HepG2 (cell line): ENCODE measurements at regions of chr21 and their contacts with region 1.

Region 1: DNA sequence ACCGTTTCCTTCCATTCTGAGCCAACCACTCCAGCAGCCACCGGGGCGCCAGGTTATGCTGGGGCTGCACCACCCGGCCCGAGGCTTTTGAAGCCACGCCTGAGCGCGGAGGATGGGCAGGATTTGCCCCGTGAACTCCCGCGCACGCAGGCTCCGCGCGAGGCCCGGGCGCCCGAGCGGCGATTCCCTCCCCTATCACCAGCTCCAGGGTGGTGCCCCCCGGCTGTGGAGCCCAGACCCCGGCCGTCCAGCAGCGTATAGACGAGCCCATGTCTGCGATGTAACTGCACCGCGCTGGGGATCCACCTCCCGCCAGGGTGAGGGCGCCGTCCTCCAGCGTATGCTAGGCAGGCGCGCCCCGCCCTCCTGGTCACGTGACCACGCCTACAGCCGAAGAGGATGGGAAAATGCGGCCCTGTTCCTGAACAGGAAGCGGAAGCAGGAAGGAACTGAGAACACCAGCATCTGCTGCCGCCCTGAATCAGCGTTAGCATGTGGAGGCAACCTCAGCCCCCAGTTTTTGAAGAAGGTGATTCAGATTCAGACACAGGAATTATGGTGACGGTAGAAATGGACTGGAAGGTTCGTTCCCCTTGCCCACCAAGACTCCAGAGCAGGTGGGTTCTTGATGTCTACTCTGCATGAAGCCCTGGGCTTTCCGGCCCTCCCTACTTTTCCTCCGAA is 46.0 kb downstream of the VPS26C start:
- DNase-seq: peak; percentile 93
- ATAC-seq: peak; percentile 92
- H3K4me3 ChIP-seq: peak overlapping the region; percentile 66 to 78 (median 67)
- H3K27ac ChIP-seq: peak overlapping the region; percentile 74
- H3K4me1 ChIP-seq: peaks cover 21% of the 10 kb centered on the region
- H3K27me3 ChIP-seq: no peaks in the 10 kb centered on the region
- CTCF ChIP-seq: peak; percentile 98
- EP300 ChIP-seq: peak in 1 of 2 experiments; percentile 6; a peak in 1 of 4 replicates
- POLR2A ChIP-seq: peak; percentile 72 to 91; a peak in 3 of 4 replicates
- RAD21 ChIP-seq: peak; percentile 82

Region 2: DNA sequence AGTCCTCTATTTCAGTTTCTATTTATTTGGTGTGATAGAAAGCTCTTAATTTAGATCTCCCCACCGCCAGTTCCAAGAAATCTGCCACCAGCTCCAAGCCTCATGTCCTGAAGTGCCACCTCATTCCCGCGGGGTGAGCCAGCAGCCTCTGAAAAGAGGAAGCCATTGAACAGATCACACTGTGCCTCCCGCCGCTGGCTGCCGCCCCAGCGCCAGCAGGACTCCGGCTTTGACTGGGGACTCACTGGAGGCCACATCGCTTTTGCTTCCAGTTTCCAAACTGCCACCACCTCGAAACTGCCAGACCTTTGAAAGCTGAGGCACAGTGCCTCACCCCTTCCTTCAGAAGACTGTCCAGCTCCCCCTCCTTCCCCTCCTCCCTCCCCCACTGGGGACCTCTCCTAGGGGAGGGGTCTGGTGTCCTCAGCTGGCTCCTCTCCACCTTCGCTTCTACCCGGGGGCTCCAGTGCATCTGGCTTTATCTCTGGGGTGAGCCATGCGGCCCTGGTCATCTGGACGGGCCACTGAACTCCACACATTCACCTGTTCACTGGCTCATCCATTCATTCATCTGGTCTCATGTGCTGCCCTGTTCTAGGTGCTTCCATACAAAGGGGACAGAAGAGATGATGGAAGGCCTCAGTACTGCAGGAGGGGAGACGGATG is 12.9 kb before region 1 on chr21:
- CTCF ChIA-PET with region 1: no interaction called
- POLR2A ChIA-PET with region 1: interaction called, 11 read pairs
- in situ Hi-C with region 1: no loop called
- intact Hi-C with region 1: loop called (anchors 2 kb)
- DNase-seq: peak; percentile 13
- ATAC-seq: peak; percentile 81
- H3K4me3 ChIP-seq: peak overlapping the region; percentile 45 to 69 (median 57)
- H3K27ac ChIP-seq: peak overlapping the region; percentile 66
- H3K4me1 ChIP-seq: peaks cover 45% of the 10 kb centered on the region
- H3K27me3 ChIP-seq: no peaks in the 10 kb centered on the region
- CTCF ChIP-seq: no peak
- EP300 ChIP-seq: no peak
- POLR2A ChIP-seq: no peak
- RAD21 ChIP-seq: no peak

Region 3: DNA sequence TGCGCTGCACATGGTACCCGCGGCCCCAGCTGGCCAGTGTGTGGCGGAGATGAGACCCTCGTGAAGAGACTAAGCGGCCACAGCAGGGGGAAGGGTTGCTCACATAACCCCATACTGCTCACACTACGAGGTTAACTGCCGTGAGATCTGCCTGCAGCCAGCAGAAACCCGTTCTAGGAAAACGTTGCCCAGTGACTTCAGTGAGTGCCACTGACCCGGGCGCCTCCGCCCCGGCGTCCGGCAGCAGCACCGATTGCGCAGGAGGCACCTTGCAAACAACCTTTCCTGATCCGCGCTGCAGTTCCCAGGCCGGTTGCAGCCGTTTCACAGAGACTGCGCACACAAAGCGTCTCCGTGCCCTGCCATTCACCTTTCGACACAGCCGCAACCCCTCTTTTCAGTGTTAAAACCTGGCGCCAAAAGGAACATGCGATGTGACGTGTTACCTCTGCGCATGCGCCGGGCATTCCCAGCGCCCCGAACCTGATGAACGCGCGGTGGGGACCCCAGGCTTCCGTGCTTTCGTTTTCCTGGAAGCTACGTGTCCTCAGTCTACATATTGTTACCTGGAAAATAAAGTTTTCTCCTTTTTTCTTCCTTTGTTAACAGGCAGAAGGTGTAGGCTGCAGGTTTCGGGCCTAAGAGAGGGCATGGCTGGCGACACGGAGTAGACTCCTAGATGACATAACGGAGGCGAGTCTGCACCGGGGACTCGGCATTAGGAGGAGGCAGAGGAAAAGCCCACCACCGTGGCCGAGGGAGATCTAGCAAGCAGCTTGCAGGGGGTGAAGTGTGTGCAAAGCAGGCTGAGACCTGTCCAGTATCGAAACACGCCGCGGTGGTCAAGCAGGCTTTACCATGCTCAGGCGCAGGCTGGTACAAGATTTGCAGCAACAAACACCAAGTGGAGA is 37.1 kb after region 1 on chr21:
- CTCF ChIA-PET with region 1: no interaction called
- POLR2A ChIA-PET with region 1: no interaction called
- in situ Hi-C with region 1: no loop called
- intact Hi-C with region 1: loop called (anchors 2 kb)
- DNase-seq: peak; percentile 84
- ATAC-seq: peak; percentile 85
- H3K4me3 ChIP-seq: peak overlapping the region; percentile 55 to 82 (median 66)
- H3K27ac ChIP-seq: peak overlapping the region; percentile 91
- H3K4me1 ChIP-seq: peaks cover 40% of the 10 kb centered on the region
- H3K27me3 ChIP-seq: no peaks in the 10 kb centered on the region
- CTCF ChIP-seq: peak; percentile 34; the same call in 1 of the 2 replicates
- EP300 ChIP-seq: no peak; a peak in 1 of 4 replicates
- POLR2A ChIP-seq: peak; percentile 71 to 78
- RAD21 ChIP-seq: no peak; the same call in 1 of the 2 replicates

Region 4: GRCh38 chr21:37267269-37268184 is 46.4 kb after region 1 on chr21 and contains the start of gene VPS26C:
- CTCF ChIA-PET with region 1: no interaction called
- POLR2A ChIA-PET with region 1: interaction called, 17 read pairs
- in situ Hi-C with region 1: no loop called
- intact Hi-C with region 1: no loop called
- DNase-seq: peak; percentile 97
- ATAC-seq: peak; percentile 91
- H3K4me3 ChIP-seq: peak within 1 kb of the TSS; percentile 70 to 90 (median 88)
- H3K27ac ChIP-seq: peak within 1 kb of the TSS; percentile 97
- H3K4me1 ChIP-seq: peaks cover 41% of the 10 kb centered on the region
- H3K27me3 ChIP-seq: no peaks in the 10 kb centered on the region
- CTCF ChIP-seq: peak; percentile 2; the same call in 1 of the 2 replicates
- EP300 ChIP-seq: no peak
- POLR2A ChIP-seq: peak; percentile 76 to 94
- RAD21 ChIP-seq: 0 out of 2 replicates have a peak, but pooled peaks have one; percentile 8
- total RNA-seq, gene VPS26C: 39.7 and 54.6 TPM in 2 replicates

Region 5: DNA sequence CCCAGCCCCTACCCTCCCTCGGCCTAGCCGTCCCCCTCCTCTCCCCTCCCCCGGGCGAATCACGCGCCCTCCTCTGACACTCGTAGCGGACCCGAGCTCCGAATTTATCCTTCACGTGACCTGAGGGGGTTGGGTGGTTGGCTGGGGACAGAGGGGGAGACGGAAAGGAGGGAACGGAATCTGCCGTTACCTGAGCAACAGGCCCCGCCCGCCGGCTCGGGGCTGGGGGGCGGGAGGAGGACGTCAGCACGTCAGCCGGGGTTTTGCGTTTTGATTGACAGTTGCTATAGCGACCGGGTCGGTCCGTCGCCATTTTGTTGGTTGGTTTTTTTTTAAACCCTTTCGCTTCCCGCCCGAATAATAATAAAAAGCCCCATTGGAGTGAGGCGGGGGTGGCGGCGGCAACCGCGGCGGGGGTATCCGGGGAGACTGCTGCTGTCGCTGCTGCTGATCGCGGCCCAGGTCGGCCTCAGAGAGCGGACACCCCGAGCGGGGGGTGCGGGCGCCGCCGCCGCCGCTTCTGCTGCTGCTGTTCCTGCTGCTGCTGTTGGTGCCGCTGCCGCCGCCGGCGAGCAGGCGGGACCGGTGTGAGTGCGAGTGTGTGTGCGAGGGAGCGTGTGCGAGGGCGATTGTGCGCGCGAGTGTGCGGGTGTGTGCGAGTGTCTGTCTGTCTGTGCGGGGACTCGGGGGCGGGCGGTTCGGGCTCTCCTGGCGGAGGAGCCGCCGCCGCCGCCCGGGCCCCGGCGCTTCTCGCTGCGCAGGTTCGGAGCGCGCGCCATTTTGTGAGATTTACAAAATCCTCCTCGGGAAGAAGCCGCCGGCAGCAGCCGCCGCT is 145.6 kb after region 1 on chr21 and contains the start of gene DYRK1A:
- CTCF ChIA-PET with region 1: no interaction called
- POLR2A ChIA-PET with region 1: interaction called, 5 read pairs
- in situ Hi-C with region 1: no loop called
- intact Hi-C with region 1: loop called (anchors 5 kb)
- DNase-seq: peak; percentile 99
- ATAC-seq: peak; percentile 82
- H3K4me3 ChIP-seq: peak within 1 kb of the TSS; percentile 92 to 99 (median 97)
- H3K27ac ChIP-seq: peak within 1 kb of the TSS; percentile 99
- H3K4me1 ChIP-seq: peaks cover 34% of the 10 kb centered on the region
- H3K27me3 ChIP-seq: no peaks in the 10 kb centered on the region; a peak in 1 of 5 replicates
- CTCF ChIP-seq: no peak
- EP300 ChIP-seq: peak; percentile 16 to 34; a peak in 2 of 4 replicates
- POLR2A ChIP-seq: peak in 1 of 2 experiments; percentile 64; a peak in 2 of 4 replicates
- RAD21 ChIP-seq: no peak
- total RNA-seq, gene DYRK1A: 32.7 and 34.2 TPM in 2 replicates

Region 6: GRCh38 chr21:37380349-37381323 is 159.5 kb after region 1 on chr21:
- CTCF ChIA-PET with region 1: no interaction called
- POLR2A ChIA-PET with region 1: no interaction called
- in situ Hi-C with region 1: no loop called
- intact Hi-C with region 1: no loop called
- DNase-seq: no peak
- ATAC-seq: no peak
- H3K4me3 ChIP-seq: no peak overlapping the region
- H3K27ac ChIP-seq: no peak overlapping the region
- H3K4me1 ChIP-seq: peaks cover 60% of the 10 kb centered on the region
- H3K27me3 ChIP-seq: no peaks in the 10 kb centered on the region
- CTCF ChIP-seq: no peak
- EP300 ChIP-seq: no peak
- POLR2A ChIP-seq: no peak
- RAD21 ChIP-seq: no peak